ENCODE measurements at regions of chr1 and their contacts with region 1.

Region 1: GRCh38 chr1:231211005-231211857 is 29.8 kb upstream of the GNPAT start:
- DNase-seq: peak; percentile 81 to 99
- H3K4me3 ChIP-seq: peak overlapping the region in 1 of 4 experiments; percentile 42; a peak in 1 of 8 replicates
- H3K27ac ChIP-seq: no peak overlapping the region
- H3K4me1 ChIP-seq: peaks cover 0 to 4% (median 0%) of the 10 kb centered on the region in 4 experiments; a peak in 5 of 7 replicates
- H3K27me3 ChIP-seq: peaks cover 31 to 44% (median 39%) of the 10 kb centered on the region in 4 experiments
- CTCF ChIP-seq: peak; percentile 85 to 94 (median 93)
- EP300 ChIP-seq: no peak
- POLR2A ChIP-seq: no peak
- RAD21 ChIP-seq: peak; percentile 97 to 98

Region 2: GRCh38 chr1:230797942-230798418 is 413.3 kb before region 1 on chr1:
- CTCF ChIA-PET with region 1: interaction called, 24 read pairs
- POLR2A ChIA-PET with region 1: no interaction called
- DNase-seq: peak in 1 of 2 experiments; percentile 63
- H3K4me3 ChIP-seq: no peak overlapping the region
- H3K27ac ChIP-seq: no peak overlapping the region
- H3K4me1 ChIP-seq: 0 out of 7 replicates have a peak, but pooled peaks cover 0 to 2% (median 0%) of the 10 kb centered on the region in 4 experiments
- H3K27me3 ChIP-seq: no peaks in the 10 kb centered on the region; a peak in 3 of 7 replicates
- CTCF ChIP-seq: peak; percentile 62 to 82 (median 77)
- EP300 ChIP-seq: no peak
- POLR2A ChIP-seq: no peak
- RAD21 ChIP-seq: peak; percentile 84 to 89

Region 3: GRCh38 chr1:230917284-230918135 is 293.7 kb before region 1 on chr1:
- CTCF ChIA-PET with region 1: interaction called, 13 read pairs
- POLR2A ChIA-PET with region 1: no interaction called
- DNase-seq: peak; percentile 58 to 86
- H3K4me3 ChIP-seq: no peak overlapping the region
- H3K27ac ChIP-seq: no peak overlapping the region
- H3K4me1 ChIP-seq: no peaks in the 10 kb centered on the region
- H3K27me3 ChIP-seq: no peaks in the 10 kb centered on the region
- CTCF ChIP-seq: peak; percentile 53 to 87 (median 81)
- EP300 ChIP-seq: no peak
- POLR2A ChIP-seq: no peak
- RAD21 ChIP-seq: peak; percentile 74 to 85

Region 4: DNA sequence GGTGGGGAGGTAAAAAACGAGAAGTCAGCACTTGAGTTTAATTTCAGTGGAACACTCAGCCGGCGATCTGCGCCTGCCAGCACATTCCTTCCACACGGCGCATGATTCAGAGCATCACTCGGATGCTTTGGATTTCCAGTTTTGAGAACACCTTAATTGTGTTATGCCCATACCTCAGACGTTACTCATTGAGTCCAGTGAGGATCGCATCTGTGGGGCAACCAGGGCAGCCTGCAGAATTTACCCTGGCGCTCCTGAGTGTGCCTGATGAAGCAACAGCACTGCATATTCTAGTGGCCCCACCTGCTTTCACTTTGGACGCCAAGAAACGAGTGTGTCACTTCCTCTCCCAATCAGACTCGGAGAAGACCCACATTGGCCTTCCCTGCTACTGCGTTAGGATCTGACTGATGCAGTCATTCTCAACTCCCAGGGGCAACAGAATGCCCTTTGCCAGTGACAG is 191.1 kb before region 1 on chr1:
- CTCF ChIA-PET with region 1: interaction called, 14 read pairs
- POLR2A ChIA-PET with region 1: no interaction called
- DNase-seq: no peak
- H3K4me3 ChIP-seq: no peak overlapping the region
- H3K27ac ChIP-seq: no peak overlapping the region
- H3K4me1 ChIP-seq: peaks cover 2 to 7% (median 6%) of the 10 kb centered on the region in 4 experiments; a peak in 5 of 7 replicates
- H3K27me3 ChIP-seq: peaks cover 0 to 6% (median 2%) of the 10 kb centered on the region in 4 experiments; a peak in 3 of 7 replicates
- CTCF ChIP-seq: no peak
- EP300 ChIP-seq: no peak
- POLR2A ChIP-seq: no peak
- RAD21 ChIP-seq: no peak